ENCODE measurements at regions of chr3 and their contacts with region 1.

Region 1: DNA sequence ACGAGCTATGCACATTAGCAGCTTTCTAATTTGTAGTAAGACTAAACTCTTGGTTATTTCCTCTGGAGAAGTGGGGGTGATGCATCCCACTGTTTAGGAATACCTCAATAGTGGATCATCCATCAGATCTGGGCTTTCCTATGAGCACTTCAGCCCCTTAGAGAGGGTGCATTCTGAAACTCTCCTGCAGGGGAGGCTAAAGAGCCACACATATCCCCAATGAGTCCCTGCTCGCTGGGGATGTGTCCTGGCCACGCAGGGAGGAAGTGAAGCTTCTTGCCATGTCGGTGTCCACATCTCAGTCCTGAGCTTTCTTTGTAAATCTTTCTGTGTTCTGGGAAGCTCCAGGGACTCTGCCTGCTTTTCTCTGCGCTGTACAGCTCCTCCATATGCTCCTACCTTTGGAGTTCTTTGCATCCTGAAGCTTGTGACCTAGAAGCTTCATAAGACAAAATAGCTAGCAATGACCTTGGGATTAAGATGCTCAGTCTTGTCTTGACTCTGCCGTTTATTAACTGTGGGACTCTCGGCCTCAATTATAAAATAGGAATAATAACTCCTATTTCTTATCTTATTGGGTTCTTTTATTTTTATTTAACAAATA is 28.3 kb upstream of the MASP1 start:
- DNase-seq: peak; percentile 17
- H3K27ac ChIP-seq: no peak overlapping the region
- CTCF ChIP-seq: no peak; the same call in 1 of the 2 replicates

Region 2: DNA sequence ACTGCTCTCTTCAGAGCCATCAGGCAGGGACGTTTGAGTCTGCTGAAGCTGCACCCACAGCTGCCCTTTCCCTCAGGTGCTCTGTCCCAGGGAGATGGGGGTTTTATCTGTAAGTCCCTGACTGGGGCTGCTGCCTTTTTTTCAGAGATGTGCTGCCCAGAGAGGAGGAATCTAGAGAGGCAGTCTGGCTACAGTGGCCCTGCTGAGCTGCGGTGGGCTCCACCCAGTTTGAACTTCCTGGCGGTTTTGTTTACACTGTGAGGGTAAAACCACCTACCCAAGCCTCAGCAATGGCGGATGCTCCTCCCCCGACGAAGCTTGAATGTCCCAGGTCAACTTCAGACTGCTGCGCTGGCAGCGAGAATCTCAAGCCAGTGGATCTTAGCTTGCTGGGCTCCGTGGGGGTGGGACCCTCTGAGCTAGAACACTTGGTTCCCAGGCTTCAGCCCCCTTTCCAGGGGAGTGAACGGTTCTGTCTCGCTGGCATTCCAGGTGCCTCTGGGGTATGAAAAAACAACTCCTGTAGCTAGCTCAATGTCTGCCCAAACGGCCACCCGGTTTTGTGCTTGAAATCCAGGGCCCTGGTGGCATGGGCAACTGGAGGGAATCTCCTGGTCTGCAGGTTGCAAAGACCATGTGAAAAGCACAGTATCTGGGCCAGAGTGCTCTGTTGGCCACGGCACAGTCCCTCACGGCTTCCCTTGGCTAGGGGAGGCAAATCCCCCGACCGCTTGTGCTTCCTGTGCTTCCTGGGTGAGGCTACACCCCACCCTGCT is 410.5 kb before region 1 on chr3:
- CTCF ChIA-PET with region 1: no interaction called
- POLR2A ChIA-PET with region 1: no interaction called
- DNase-seq: no peak
- H3K27ac ChIP-seq: no peak overlapping the region
- CTCF ChIP-seq: no peak

Region 3: DNA sequence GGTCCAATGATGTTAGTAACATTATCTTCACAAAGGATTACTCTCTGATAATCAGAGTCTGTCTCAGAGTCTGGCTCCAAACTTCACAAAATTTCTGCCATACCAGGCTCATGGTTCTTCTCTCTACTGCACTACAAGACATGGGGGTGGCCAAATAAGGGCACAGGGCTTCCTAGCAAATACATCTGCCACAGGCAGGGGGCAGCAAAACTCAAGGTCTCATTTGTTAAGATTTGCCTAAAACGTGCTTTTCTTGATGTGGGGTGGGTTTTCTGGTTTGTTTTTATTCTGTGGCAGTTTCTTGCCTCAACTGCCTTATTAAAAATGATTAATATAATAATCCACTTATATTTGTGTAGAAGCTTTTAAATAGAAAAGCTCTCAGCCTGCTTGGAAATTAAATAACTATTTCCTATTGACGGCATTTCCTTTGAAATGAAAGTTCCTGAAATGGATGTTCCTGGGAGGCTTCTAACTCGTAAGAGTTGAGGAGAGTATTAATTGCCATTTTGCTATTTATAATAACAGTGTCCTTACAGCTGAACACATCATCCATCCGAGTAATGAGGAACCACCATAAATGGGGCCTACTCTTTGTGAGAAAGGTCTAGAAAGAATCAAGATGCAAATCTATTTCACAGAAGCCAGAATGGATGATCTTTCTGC is 296.6 kb after region 1 on chr3:
- CTCF ChIA-PET with region 1: interaction called, 10 read pairs
- POLR2A ChIA-PET with region 1: no interaction called
- DNase-seq: peak; percentile 61
- H3K27ac ChIP-seq: no peak overlapping the region
- CTCF ChIP-seq: peak; percentile 63

Measured in RWPE1 (cell line).